CD8-positive, alpha-beta T cell (primary cell): ENCODE measurements at regions of chr19 and their contacts with region 1.

Region 1: DNA sequence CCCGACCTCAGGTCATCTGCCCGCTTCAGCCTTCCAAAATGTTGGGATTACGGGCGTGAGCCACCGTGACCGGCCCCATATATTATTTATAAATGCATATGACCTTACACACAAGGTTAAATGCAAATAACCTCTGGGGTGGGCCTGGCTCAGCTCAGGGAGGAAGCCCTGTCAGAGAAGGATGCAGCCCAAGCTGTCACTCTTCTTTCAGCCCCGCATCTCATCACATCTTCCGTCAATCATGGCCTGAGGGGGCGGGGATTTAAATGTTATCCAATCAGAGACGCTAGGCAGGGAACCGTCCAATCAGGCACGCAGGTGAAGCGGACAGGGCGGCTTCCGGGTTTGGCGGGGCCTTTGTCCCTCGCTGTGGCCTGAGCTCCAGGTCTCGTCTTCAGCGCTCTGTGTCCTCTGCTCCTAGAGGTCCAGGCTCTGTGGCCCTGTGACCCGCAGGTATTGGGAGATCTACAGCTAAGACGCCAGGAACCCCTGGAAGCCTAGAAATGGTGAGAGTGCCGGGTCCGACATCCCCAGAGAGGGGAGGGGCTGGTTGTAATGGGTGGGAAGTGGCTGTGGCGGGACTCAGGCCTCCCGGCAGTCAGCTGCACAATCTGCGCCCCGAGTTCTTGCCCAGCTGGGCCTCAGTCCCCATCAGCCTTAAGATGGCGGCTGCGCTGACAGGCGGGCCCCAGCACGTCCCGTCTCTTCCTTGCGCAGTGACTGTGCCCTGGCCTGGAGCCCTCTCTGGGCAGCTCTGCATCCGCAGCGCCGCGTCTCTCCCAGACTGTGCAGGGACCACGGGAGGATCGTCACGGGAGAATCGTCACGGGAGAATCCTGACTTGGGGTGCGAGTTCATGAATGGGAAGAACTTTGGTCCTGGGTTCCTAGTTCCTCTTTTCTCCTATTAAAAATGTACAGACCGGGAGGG is at the start of gene ZNF430:
- DNase-seq: peak; percentile 86 to 97 (median 93)
- ATAC-seq: peak; percentile 95
- H3K4me3 ChIP-seq: peak within 1 kb of the TSS; percentile 65 to 91
- H3K4me3 Mint-ChIP-seq: peak within 1 kb of the TSS; percentile 100
- H3K27ac ChIP-seq: peak within 1 kb of the TSS; percentile 92 to 95
- H3K27ac Mint-ChIP-seq: peak within 1 kb of the TSS; percentile 100
- H3K4me1 ChIP-seq: peaks cover 26% of the 10 kb centered on the region
- H3K4me1 Mint-ChIP-seq: peaks cover 48% of the 10 kb centered on the region
- H3K27me3 ChIP-seq: no peaks in the 10 kb centered on the region
- H3K27me3 Mint-ChIP-seq: no peaks in the 10 kb centered on the region
- CTCF ChIP-seq: no peak
- total RNA-seq, gene ZNF430: 42.3 to 45.1 TPM

Region 2: DNA sequence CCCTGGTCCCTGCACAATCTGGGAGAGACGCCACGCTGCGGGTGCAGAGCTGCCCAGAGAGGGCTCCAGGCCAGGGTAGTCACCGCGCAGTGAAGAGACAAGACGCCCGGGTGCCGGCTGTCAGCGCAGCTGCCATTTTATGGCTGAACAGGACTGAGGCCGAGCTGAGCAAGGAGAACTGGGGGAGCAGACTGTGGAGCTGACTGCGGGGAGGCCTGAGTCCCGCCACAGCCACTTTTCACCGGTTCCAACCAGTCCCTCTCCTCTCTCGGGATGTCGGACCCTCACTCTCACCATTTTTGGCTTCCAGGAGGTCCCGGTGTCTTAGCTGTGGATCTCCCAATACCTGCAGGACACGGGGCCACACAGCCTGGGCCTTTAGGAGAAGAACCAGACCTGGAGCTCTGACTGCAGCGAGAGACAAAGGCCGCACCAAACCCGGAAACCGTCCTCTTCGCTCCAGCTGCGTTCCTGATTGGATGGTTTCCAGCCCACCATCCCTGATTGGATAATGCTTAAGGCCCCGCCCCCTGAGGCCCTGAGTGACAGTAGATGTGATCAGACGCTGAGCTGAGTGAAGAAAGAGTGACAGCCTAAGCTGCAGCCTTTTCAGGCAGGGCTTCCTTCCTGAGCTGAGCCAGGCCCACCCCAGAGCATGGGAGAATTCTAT is 359.3 kb before region 1 on chr19 and contains the start of gene ZNF626:
- CTCF ChIA-PET with region 1: no interaction called
- POLR2A ChIA-PET with region 1: interaction called, 8 read pairs
- intact Hi-C with region 1: loop called (anchors 1 to 10 kb)
- DNase-seq: peak; percentile 78 to 97 (median 90)
- ATAC-seq: peak; percentile 98
- H3K4me3 ChIP-seq: peak within 1 kb of the TSS; percentile 67 to 91
- H3K4me3 Mint-ChIP-seq: peak within 1 kb of the TSS; percentile 94
- H3K27ac ChIP-seq: peak within 1 kb of the TSS; percentile 73 to 91
- H3K27ac Mint-ChIP-seq: peak within 1 kb of the TSS; percentile 97
- H3K4me1 ChIP-seq: peaks cover 12% of the 10 kb centered on the region
- H3K4me1 Mint-ChIP-seq: peaks cover 43% of the 10 kb centered on the region
- H3K27me3 ChIP-seq: no peaks in the 10 kb centered on the region
- H3K27me3 Mint-ChIP-seq: no peaks in the 10 kb centered on the region
- CTCF ChIP-seq: no peak
- total RNA-seq, gene ZNF626: 5.7 to 6.6 TPM

Region 3: GRCh38 chr19:20923077-20923871 is 97.3 kb before region 1 on chr19 and contains the start of gene ZNF85:
- CTCF ChIA-PET with region 1: no interaction called
- POLR2A ChIA-PET with region 1: interaction called, 12 read pairs
- intact Hi-C with region 1: loop called (anchors 1 to 5 kb)
- DNase-seq: peak; percentile 80 to 94 (median 90)
- ATAC-seq: peak; percentile 99
- H3K4me3 ChIP-seq: peak within 1 kb of the TSS; percentile 85 to 93
- H3K4me3 Mint-ChIP-seq: peak within 1 kb of the TSS; percentile 97
- H3K27ac ChIP-seq: peak within 1 kb of the TSS; percentile 82 to 88
- H3K27ac Mint-ChIP-seq: peak within 1 kb of the TSS; percentile 93
- H3K4me1 ChIP-seq: no peaks in the 10 kb centered on the region
- H3K4me1 Mint-ChIP-seq: peaks cover 23% of the 10 kb centered on the region
- H3K27me3 ChIP-seq: no peaks in the 10 kb centered on the region
- H3K27me3 Mint-ChIP-seq: no peaks in the 10 kb centered on the region
- CTCF ChIP-seq: no peak
- total RNA-seq, gene ZNF85: 3.7 to 4.9 TPM

Region 4: DNA sequence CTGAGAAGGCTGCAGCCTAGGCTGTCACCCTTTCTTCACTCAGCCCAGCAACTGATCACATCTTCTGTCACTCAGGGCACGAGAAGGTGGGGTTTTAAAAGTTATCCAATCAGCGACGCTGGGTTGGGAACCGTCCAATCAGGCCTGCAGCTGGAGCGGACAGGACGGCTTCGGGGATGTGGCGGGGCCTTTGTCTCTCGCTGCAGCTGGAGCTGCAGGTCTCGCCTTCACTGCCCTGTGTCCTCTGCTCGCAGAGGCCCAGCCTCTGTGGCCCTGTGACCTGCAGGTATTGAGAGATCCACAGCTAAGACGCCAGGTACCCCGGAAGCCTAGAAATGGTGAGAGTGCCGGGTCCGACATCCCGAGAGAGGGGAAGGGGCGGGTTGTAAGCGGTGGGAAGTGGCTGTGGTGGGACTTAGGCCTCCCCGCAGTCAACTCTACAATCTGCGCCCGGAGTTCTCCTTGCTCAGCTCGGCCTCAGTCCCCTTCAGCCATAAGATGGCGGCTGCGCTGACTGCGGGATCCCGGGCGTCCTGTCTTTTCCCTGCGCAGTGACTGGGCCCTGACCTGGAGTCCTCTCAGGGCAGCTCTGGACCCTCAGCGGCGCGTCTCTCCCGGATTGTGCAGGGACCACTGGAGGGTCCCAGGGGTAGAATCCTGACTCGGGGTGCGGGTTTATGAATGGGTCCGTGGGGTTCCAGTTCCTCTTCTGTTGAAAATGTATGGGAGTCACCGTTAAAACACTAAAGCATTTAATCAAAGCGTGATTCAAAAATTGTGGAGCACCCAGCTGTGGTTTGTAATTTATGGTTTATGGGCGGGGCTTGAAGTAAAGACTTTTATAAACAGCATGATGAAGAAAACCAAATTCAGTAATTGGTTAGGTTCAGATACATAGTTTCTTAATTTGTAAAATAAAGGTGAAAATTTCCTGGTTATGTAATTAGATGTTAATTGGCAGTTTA is 61.7 kb after region 1 on chr19 and contains the start of gene ZNF714:
- CTCF ChIA-PET with region 1: no interaction called
- POLR2A ChIA-PET with region 1: no interaction called
- intact Hi-C with region 1: loop called in 1 of 2 experiments (anchors 2 kb)
- DNase-seq: peak; percentile 63 to 89 (median 79)
- ATAC-seq: peak; percentile 100
- H3K4me3 ChIP-seq: peak within 1 kb of the TSS; percentile 63 to 89
- H3K4me3 Mint-ChIP-seq: peak within 1 kb of the TSS; percentile 96
- H3K27ac ChIP-seq: peak within 1 kb of the TSS; percentile 32 to 68
- H3K27ac Mint-ChIP-seq: peak within 1 kb of the TSS; percentile 88
- H3K4me1 ChIP-seq: no peaks in the 10 kb centered on the region
- H3K4me1 Mint-ChIP-seq: peaks cover 9% of the 10 kb centered on the region
- H3K27me3 ChIP-seq: no peaks in the 10 kb centered on the region
- H3K27me3 Mint-ChIP-seq: no peaks in the 10 kb centered on the region
- CTCF ChIP-seq: no peak
- total RNA-seq, gene ZNF714: 7.5 to 8.5 TPM

Region 5: DNA sequence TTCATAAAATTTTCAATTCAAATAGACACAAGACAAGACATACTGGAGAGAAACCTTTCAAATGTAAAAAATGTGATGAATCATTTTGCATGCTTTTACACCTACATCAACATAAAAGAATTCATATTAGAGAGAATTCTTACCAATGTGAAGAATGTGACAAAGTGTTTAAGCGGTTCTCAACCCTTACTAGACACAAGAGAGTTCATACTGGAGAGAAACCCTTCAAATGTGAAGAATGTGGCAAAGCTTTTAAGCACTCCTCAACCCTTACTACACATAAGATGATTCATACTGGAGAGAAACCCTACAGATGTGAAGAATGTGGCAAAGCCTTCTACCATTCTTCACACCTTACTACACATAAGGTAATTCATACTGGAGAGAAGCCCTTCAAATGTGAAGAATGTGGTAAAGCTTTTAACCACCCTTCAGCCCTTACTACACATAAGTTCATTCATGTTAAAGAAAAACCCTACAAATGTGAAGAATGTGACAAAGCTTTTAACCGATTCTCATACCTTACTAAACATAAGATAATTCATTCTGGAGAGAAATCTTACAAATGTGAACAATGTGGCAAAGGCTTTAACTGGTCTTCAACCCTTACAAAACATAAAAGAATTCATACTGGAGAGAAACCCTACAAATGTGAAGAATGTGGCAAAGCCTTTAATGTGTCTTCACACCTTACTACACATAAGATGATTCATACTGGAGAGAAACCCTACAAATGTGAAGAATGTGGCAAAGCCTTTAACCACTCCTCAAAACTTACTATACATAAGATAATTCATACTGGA is 96.7 kb after region 1 on chr19:
- CTCF ChIA-PET with region 1: no interaction called
- POLR2A ChIA-PET with region 1: no interaction called
- intact Hi-C with region 1: no loop called
- DNase-seq: no peak
- ATAC-seq: no peak
- H3K4me3 ChIP-seq: no peak overlapping the region
- H3K4me3 Mint-ChIP-seq: no peak overlapping the region
- H3K27ac ChIP-seq: no peak overlapping the region
- H3K27ac Mint-ChIP-seq: no peak overlapping the region
- H3K4me1 ChIP-seq: no peaks in the 10 kb centered on the region
- H3K4me1 Mint-ChIP-seq: no peaks in the 10 kb centered on the region
- H3K27me3 ChIP-seq: no peaks in the 10 kb centered on the region
- H3K27me3 Mint-ChIP-seq: no peaks in the 10 kb centered on the region
- CTCF ChIP-seq: no peak

Region 6: GRCh38 chr19:21127898-21128297 is 107.3 kb after region 1 on chr19:
- CTCF ChIA-PET with region 1: no interaction called
- POLR2A ChIA-PET with region 1: no interaction called
- intact Hi-C with region 1: no loop called
- DNase-seq: no peak
- ATAC-seq: no peak
- H3K4me3 ChIP-seq: no peak overlapping the region
- H3K4me3 Mint-ChIP-seq: no peak overlapping the region
- H3K27ac ChIP-seq: no peak overlapping the region
- H3K27ac Mint-ChIP-seq: no peak overlapping the region
- H3K4me1 ChIP-seq: no peaks in the 10 kb centered on the region
- H3K4me1 Mint-ChIP-seq: peaks cover 5% of the 10 kb centered on the region
- H3K27me3 ChIP-seq: no peaks in the 10 kb centered on the region
- H3K27me3 Mint-ChIP-seq: no peaks in the 10 kb centered on the region
- CTCF ChIP-seq: no peak

Region 7: DNA sequence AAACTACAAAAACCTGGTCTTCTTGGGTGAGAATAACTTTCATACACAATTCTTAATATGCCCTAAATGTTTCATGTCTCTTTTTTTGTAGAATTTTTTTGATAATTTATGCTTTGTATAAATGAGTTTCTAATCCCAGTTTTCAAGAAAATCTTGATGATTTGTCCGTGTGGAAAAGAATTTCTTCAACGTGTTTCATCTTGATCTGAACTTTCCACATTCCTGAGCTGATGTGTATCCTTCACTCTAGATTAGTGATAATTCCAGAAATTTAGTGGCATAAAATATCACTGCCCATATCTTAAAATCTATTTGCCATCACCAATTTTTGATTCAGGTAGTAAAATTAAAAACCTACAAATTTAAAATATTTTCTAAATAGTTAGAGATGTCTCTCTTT is 145.9 kb after region 1 on chr19:
- CTCF ChIA-PET with region 1: no interaction called
- POLR2A ChIA-PET with region 1: no interaction called
- intact Hi-C with region 1: no loop called
- DNase-seq: no peak
- ATAC-seq: no peak
- H3K4me3 ChIP-seq: no peak overlapping the region
- H3K4me3 Mint-ChIP-seq: no peak overlapping the region
- H3K27ac ChIP-seq: no peak overlapping the region
- H3K27ac Mint-ChIP-seq: no peak overlapping the region
- H3K4me1 ChIP-seq: no peaks in the 10 kb centered on the region
- H3K4me1 Mint-ChIP-seq: peaks cover 16% of the 10 kb centered on the region
- H3K27me3 ChIP-seq: no peaks in the 10 kb centered on the region
- H3K27me3 Mint-ChIP-seq: no peaks in the 10 kb centered on the region
- CTCF ChIP-seq: no peak

Region 8: DNA sequence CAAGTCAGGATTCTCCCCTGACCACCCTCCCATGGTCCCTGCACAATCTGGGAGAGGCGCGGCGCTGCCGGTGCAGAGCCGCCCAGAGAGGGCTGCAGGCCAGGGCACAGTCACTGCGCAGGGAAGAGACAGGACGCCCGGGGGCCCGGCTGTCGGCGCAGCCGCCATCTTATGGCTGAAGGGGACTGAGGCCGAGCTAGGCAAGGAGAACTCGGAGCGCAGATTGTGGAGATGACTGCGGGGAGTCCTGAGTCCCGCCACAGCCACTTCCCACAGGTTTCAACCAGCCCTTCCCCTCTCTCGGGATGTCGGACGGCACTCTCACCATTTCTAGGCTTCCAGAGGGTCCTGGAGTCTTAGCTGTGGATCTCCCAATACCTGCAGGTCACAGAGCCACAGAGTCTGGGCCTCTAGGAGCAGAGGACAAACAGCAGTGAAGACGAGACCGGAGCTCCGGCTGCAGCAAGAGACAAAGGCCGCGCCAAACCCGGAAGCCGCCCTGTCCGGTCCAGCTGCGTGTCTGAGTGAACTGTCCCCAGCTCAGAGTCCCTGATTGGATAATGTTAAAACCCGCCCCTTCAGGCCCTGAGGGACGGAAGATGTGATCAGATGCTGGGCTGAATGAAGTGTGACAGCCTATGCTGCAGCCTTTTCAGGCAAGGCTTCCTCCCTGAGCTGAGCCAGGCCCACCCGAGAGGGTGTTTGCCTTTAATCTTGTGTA is 308.5 kb after region 1 on chr19 and contains the start of gene ZNF708:
- CTCF ChIA-PET with region 1: no interaction called
- POLR2A ChIA-PET with region 1: no interaction called
- intact Hi-C with region 1: loop called in 1 of 2 experiments (anchors 5 kb)
- DNase-seq: peak; percentile 32 to 90 (median 77)
- ATAC-seq: peak; percentile 95
- H3K4me3 ChIP-seq: peak within 1 kb of the TSS; percentile 91 to 97
- H3K4me3 Mint-ChIP-seq: peak within 1 kb of the TSS; percentile 97
- H3K27ac ChIP-seq: peak within 1 kb of the TSS; percentile 94 to 99
- H3K27ac Mint-ChIP-seq: peak within 1 kb of the TSS; percentile 98
- H3K4me1 ChIP-seq: peaks cover 17% of the 10 kb centered on the region
- H3K4me1 Mint-ChIP-seq: peaks cover 44% of the 10 kb centered on the region
- H3K27me3 ChIP-seq: no peaks in the 10 kb centered on the region
- H3K27me3 Mint-ChIP-seq: no peaks in the 10 kb centered on the region
- CTCF ChIP-seq: no peak
- total RNA-seq, gene ZNF708: 23.7 to 24.7 TPM

Region 9: GRCh38 chr19:21835810-21836444 is 815.4 kb after region 1 on chr19 and contains the start of gene ZNF43:
- CTCF ChIA-PET with region 1: no interaction called
- POLR2A ChIA-PET with region 1: interaction called, 3 read pairs
- intact Hi-C with region 1: loop called in 1 of 2 experiments (anchors 1 kb)
- DNase-seq: peak; percentile 85 to 96 (median 93)
- ATAC-seq: peak; percentile 97
- H3K4me3 ChIP-seq: peak within 1 kb of the TSS; percentile 84 to 85
- H3K4me3 Mint-ChIP-seq: peak within 1 kb of the TSS; percentile 98
- H3K27ac ChIP-seq: peak within 1 kb of the TSS; percentile 75 to 84
- H3K27ac Mint-ChIP-seq: peak within 1 kb of the TSS; percentile 97
- H3K4me1 ChIP-seq: peaks cover 9% of the 10 kb centered on the region
- H3K4me1 Mint-ChIP-seq: peaks cover 34% of the 10 kb centered on the region
- H3K27me3 ChIP-seq: no peaks in the 10 kb centered on the region
- H3K27me3 Mint-ChIP-seq: no peaks in the 10 kb centered on the region
- CTCF ChIP-seq: no peak
- total RNA-seq, gene ZNF43: 29.9 to 31.8 TPM